Natural killer cell (primary cell): ENCODE measurements at regions of chr9 and their contacts with region 1.

Region 1: DNA sequence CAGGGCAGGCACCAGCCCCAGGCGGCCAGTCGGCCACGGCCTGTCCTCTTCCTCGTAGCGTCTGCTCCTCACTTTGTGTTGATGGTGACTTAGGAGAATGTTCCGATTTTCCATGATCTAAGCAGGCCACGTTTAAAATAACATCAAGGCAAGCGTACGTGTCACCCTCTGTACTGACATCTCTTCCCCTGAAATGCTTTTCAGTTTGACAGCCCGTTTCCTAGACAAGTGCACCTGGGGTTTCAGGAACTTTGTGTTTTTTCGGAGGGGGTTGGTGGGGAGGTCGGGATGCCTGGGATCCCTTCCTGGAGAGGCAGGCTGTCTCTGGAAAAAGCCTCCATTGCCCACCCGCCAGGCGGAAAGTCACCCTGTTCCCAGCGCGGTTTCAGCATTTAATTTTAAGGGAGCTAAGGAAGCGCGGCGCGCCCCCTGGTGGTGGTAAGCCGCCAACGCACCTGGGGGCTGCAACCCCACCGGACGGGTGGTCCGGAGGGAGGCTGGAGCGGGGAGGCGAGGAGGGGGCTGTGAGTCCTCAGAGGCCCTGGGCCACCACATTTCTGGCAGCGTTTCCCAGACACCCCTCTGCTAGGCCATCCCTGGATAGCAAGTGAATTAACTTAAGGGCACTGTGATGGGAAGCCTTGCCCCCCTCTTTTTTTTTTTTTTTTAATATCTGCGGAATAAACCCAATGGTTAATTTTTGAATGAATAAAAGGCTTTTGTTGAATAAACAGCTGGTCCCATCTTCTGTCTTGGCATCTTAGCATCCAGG is 29.5 kb upstream of the HMCN2 start:
- DNase-seq: peak; percentile 73 to 82
- ATAC-seq: peak; percentile 66 to 82 (median 73)
- H3K4me3 ChIP-seq: no peak overlapping the region
- H3K4me3 Mint-ChIP-seq: no peak overlapping the region
- H3K27ac ChIP-seq: no peak overlapping the region
- H3K27ac Mint-ChIP-seq: peak overlapping the region in 1 of 2 donors; percentile 43
- H3K4me1 ChIP-seq: peaks cover 18% of the 10 kb centered on the region
- H3K4me1 Mint-ChIP-seq: peaks cover 9 to 11% of the 10 kb centered on the region in 2 donors
- H3K27me3 ChIP-seq: no peaks in the 10 kb centered on the region
- H3K27me3 Mint-ChIP-seq: no peaks in the 10 kb centered on the region
- CTCF ChIP-seq: peak; percentile 97

Region 2: DNA sequence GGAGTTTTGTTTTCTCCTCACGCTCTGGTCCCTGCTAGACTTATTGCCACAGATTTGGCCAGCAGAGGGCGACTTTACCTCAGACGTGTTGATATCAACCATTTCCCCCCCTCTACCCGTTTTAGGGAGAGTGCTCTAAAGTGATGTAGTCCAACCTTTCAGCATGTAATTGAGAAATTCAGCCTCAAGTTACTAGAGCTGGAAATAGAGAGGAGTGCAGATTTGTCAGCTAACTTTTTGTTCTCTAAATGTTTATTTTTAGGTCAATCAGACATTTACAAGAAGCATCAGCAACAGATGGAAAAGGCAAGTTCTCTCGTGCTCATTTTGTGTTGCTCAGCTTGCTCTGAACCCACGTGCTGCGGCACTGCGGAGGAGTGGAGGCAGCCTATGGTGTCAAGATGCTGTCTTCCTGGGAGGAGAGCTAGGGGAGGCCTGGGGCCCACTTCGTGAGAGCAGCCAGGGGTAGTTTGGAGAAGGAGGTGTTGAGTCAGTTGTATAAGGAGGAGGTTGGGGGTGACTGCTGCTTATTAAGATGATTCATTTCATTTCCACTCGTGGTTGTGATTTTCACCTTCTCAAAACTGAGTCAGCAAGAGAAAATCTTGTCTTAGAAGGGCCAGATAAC is 128.7 kb before region 1 on chr9:
- intact Hi-C with region 1: loop called (anchors 1 kb)
- DNase-seq: peak; percentile 80 to 94
- ATAC-seq: peak; percentile 76 to 87 (median 82)
- H3K4me3 ChIP-seq: no peak overlapping the region
- H3K4me3 Mint-ChIP-seq: peak overlapping the region; percentile 73
- H3K27ac ChIP-seq: no peak overlapping the region
- H3K27ac Mint-ChIP-seq: peak overlapping the region; percentile 85 to 89
- H3K4me1 ChIP-seq: peaks cover 23% of the 10 kb centered on the region
- H3K4me1 Mint-ChIP-seq: peaks cover 27 to 42% of the 10 kb centered on the region in 2 donors
- H3K27me3 ChIP-seq: no peaks in the 10 kb centered on the region
- H3K27me3 Mint-ChIP-seq: no peaks in the 10 kb centered on the region
- CTCF ChIP-seq: peak; percentile 90

Region 3: GRCh38 chr9:130265431-130266235 is 29.6 kb after region 1 on chr9 and contains the start of gene HMCN2:
- intact Hi-C with region 1: no loop called
- DNase-seq: no peak
- ATAC-seq: peak in 1 of 3 donors; percentile 25
- H3K4me3 ChIP-seq: no peak within 1 kb of the TSS
- H3K4me3 Mint-ChIP-seq: no peak within 1 kb of the TSS
- H3K27ac ChIP-seq: no peak within 1 kb of the TSS
- H3K27ac Mint-ChIP-seq: no peak within 1 kb of the TSS
- H3K4me1 ChIP-seq: no peaks in the 10 kb centered on the region
- H3K4me1 Mint-ChIP-seq: no peaks in the 10 kb centered on the region
- H3K27me3 ChIP-seq: peaks cover 22% of the 10 kb centered on the region
- H3K27me3 Mint-ChIP-seq: peaks cover 48 to 70% of the 10 kb centered on the region in 2 donors
- CTCF ChIP-seq: no peak
- total RNA-seq, gene HMCN2: not detected